HEK293T (cell line): ENCODE measurements at regions of chr17 and their contacts with region 1.

Region 1: DNA sequence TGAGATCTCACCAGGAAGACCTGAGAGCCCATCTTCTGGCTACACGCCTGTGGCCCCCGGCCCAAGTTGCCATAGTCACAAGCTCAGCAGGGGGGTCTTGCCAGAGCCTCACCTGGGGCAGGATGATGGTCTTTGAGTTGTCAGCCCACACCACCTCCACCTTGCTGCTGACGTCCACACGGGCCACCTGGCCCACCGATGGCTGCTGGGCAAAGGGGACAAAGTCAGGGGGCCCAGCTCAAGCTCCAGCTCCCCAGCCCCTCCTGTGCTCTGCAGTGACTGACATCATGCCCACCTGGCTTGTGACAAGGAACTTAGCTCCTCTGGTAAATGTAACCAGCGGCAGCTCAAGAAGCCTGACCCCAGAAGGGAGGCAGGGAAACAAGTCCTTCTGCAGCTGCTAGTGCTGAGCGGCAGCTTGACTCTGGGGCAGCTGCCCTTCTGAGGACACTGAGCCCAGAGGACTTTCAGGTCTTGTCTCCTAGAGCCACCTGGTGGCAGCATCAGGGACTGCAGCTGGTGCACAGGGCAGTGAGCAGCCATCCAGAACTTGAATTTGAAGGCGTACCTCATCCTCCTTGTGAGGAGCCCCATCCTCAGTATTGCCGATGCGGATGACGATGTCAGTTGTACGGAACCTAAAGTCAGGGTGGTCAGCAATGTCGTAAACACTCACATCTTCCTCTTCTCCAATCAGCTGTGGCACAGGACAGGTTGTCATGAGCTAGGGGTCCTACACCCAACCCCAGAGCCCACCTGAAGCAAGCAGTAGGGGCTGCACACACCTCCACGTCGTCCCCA is 13.5 kb downstream of the SPHK1 start:
- DNase-seq: peak; percentile 90

Region 2: DNA sequence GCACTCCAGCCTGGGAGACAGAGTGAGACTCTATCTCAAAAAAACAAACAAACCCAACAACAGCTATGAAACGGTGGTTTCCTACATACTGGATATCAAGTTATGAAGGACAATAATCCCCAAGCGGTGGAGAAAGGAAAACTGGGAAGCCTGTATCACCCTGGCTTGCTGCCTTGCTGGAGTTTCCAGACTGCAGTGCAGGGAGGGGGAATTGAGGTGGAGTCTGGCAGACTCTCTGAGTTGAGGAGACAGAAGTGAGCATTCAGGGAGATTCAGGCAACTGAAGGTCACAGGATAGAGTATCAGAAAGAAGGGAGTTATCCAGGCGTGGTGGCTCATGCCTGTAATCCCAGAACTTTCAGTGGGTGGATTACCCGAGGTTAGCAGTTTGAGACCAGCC is 101.7 kb before region 1 on chr17:
- CTCF ChIA-PET with region 1: interaction called, 42 read pairs
- POLR2A ChIA-PET with region 1: no interaction called
- DNase-seq: no peak

Region 3: GRCh38 chr17:76304226-76305134 is 93.4 kb before region 1 on chr17:
- CTCF ChIA-PET with region 1: interaction called, 42 read pairs
- POLR2A ChIA-PET with region 1: interaction called, 4 read pairs
- DNase-seq: no peak

Region 4: DNA sequence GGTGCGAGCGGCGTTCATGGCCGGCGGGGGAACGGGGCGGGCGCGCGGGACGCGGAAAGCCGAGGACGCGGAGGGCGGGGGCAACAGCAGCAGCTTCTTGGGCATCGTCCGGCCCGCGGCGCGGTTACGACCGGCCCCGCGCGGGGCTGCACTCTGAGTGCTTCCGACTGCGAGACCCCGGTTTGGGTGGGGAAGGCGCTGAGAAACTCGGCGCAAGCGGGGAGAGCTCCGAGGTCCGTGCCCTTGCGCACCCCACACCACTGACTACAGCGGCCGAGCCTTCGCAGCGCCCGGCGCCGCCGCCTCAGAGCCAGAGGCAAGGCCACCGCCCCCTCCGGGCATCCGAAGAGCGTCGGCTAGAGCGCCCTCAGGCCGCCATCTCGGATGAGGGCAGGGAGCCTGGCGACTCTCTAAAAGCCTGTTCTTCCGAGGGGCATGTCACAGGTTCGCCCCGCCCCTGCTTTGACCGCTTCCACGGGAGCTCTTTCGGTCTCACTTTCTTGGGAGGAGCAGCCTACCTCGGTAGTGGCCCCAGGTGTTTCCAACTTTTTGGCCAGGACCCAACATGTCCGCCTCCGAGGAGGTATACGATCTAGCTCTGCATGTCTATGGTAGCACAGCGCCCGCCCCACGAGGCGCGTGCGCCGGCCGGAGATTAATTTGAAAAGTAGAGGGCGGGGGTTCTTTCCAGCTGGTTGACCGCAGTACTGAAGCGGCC is 44.1 kb before region 1 on chr17 and contains the start of gene PRPSAP1:
- CTCF ChIA-PET with region 1: interaction called, 4 read pairs
- POLR2A ChIA-PET with region 1: interaction called, 23 read pairs
- DNase-seq: peak; percentile 92

Region 5: GRCh38 chr17:76365256-76365903 is 32.5 kb before region 1 on chr17:
- CTCF ChIA-PET with region 1: interaction called, 16 read pairs
- POLR2A ChIA-PET with region 1: no interaction called
- DNase-seq: no peak

Region 6: DNA sequence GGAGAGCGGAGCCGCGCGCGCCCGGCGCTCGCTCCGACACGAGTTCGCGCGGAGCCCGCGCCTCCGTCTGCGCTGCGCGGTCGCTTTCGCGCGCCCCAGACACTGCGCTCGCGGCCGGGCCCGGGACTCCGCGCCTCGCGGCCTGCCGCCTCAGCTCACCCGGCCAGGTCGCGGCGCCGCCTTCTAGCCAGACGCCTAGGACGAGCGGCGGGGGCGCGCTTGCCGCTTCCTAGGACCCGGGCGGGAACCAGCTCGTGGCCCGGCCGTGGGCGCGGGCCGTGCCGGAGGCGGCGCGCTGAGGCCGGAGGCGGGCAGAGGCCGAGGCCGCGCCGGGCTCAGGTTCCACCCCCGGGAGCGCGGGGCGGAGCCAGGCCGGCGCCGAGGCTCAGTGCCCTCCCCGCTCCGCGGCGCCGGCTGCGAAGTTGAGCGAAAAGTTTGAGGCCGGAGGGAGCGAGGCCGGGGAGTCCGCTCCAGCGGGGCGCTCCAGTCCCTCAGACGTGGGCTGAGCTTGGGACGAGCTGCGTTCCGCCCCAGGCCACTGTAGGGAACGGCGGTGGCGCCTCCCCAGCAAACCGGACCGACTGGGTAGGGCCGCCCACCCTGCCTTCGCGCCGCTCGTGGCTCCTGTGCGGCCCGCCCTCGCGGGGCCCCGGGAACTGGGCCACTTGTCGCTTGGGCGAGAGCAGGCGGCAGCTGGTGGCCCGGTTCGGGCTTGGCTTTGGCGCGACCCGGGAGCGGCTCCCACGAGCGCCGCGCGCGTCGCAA is 13.5 kb before region 1 on chr17 and contains the start of gene SPHK1:
- CTCF ChIA-PET with region 1: interaction called, 26 read pairs
- POLR2A ChIA-PET with region 1: interaction called, 3 read pairs
- DNase-seq: peak; percentile 86

Region 7: GRCh38 chr17:76458580-76459490 is 60.9 kb after region 1 on chr17:
- CTCF ChIA-PET with region 1: interaction called, 12 read pairs
- POLR2A ChIA-PET with region 1: interaction called, 3 read pairs
- DNase-seq: peak; percentile 46